PC-9 (cell line): ENCODE measurements at regions of chr6 and their contacts with region 1.

Region 1: DNA sequence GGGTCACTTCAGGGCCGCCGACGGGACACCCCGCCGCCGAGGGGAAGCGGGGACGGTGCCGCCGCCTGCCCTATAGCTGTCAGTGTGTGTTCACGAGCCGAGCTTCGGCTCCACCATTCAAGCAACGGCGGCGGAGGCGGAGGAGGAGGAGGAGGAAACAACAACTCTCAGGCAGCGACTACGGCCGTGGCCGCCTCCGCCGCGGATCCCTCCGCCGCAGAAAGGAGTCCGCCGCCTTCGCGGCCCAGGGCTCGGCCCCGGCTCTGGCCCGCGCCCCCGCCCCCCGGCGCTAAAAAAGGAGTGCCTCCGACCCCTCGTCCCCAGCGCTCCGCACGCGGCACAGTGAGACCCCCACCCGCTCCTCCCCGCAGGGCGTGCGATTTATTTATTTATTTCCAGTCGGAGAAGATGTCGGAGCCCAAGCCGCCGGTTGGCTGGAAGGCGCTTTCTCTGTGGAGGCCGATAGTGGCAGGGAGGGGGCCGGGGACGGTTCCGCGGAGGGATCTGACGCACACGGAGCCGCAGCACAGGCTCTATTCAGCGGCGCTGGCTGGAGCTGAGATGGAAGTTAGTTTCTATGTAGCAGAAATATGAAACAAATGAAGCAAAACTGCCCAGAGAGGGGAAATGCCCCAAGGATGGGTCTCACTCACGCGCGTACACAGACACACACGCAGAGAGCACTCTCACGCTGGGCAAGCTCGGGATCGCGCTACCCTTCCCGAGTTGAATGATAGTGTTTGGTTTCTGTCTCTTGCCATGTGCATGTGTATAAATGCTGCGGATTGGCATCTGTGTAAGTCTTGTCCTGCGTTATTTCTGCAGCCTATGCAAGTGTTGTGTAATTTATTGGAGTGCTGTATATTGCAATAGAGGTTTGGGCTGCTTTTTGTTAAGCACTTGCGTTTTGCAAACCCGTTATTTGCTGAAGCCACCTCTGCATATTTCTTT is at the start of gene PHIP:
- DNase-seq: peak; percentile 71 to 89
- H3K4me3 ChIP-seq: peak within 1 kb of the TSS; percentile 89
- H3K27ac ChIP-seq: peak within 1 kb of the TSS; percentile 69
- H3K4me1 ChIP-seq: peaks cover 22% of the 10 kb centered on the region; the same call in 1 of the 2 replicates
- H3K27me3 ChIP-seq: no peaks in the 10 kb centered on the region
- CTCF ChIP-seq: no peak
- total RNA-seq, gene PHIP: 20.6 and 29.0 TPM in 2 replicates

Region 2: GRCh38 chr6:79233611-79234149 is 155.3 kb after region 1 on chr6:
- CTCF ChIA-PET with region 1: no interaction called
- POLR2A ChIA-PET with region 1: no interaction called
- intact Hi-C with region 1: loop called (anchors 2 kb)
- DNase-seq: peak; percentile 66 to 80
- H3K4me3 ChIP-seq: peak overlapping the region; percentile 92
- H3K27ac ChIP-seq: peak overlapping the region; percentile 6; the same call in 1 of the 2 replicates
- H3K4me1 ChIP-seq: peaks cover 10% of the 10 kb centered on the region
- H3K27me3 ChIP-seq: no peaks in the 10 kb centered on the region
- CTCF ChIP-seq: 0 out of 2 replicates have a peak, but pooled peaks have one; percentile 25

Region 3: GRCh38 chr6:79431537-79431933 is 353.2 kb after region 1 on chr6:
- CTCF ChIA-PET with region 1: no interaction called
- POLR2A ChIA-PET with region 1: interaction called, 21 read pairs
- intact Hi-C with region 1: no loop called
- DNase-seq: no peak
- H3K4me3 ChIP-seq: no peak overlapping the region
- H3K27ac ChIP-seq: no peak overlapping the region
- H3K4me1 ChIP-seq: no peaks in the 10 kb centered on the region
- H3K27me3 ChIP-seq: no peaks in the 10 kb centered on the region
- CTCF ChIP-seq: no peak

Region 4: GRCh38 chr6:79466207-79466834 is 388.0 kb after region 1 on chr6:
- CTCF ChIA-PET with region 1: no interaction called
- POLR2A ChIA-PET with region 1: interaction called, 12 read pairs
- intact Hi-C with region 1: loop called (anchors 2 kb)
- DNase-seq: no peak
- H3K4me3 ChIP-seq: no peak overlapping the region
- H3K27ac ChIP-seq: no peak overlapping the region
- H3K4me1 ChIP-seq: peaks cover 18% of the 10 kb centered on the region
- H3K27me3 ChIP-seq: no peaks in the 10 kb centered on the region
- CTCF ChIP-seq: peak; percentile 71

Region 5: GRCh38 chr6:79672631-79673111 is 594.3 kb after region 1 on chr6:
- CTCF ChIA-PET with region 1: no interaction called
- POLR2A ChIA-PET with region 1: no interaction called
- intact Hi-C with region 1: loop called (anchors 5 kb)
- DNase-seq: peak; percentile 2 to 48
- H3K4me3 ChIP-seq: no peak overlapping the region
- H3K27ac ChIP-seq: peak overlapping the region; percentile 76
- H3K4me1 ChIP-seq: peaks cover 31% of the 10 kb centered on the region
- H3K27me3 ChIP-seq: no peaks in the 10 kb centered on the region
- CTCF ChIP-seq: peak; percentile 61; the same call in 1 of the 2 replicates

Region 6: DNA sequence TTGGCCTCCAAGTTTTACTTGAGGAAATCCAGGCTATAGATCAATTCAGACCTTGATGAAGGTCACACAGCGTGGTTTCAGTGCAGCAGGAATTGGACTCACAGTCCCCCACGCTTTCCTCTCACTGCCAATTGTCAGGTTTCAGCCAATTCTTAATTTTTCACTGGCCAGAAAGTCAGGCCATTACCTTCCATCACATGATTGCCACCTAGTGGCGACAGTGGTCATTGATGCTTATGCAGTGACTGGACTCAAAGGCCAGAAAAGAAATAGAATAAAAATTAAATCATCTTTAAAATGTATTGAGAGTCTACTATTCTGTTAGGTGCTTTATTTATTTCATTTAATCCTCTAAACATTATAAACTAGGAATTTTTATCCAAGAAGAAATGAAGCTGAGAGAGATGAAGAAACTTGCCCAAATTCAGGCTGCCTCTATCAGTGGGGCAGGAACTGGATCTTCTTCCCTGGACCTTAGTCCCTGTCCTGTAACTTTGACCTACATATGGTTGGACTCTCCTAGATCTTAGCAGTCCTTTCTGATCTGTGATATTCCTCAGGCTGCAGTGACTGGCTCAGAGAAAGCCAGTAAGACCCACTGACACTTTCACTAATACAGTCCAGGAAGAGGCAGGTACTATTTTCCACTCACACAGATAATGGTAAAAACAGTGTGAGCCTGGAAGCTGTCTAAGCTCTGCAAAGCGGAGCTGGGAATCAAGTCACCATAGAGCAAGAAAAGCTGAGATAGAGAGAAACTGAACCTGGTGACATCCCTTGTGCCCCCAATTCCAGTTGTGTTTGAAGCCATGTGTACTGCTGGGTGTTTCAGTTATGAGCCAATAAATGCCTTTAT is 735.7 kb after region 1 on chr6:
- CTCF ChIA-PET with region 1: no interaction called
- POLR2A ChIA-PET with region 1: no interaction called
- intact Hi-C with region 1: loop called (anchors 10 kb)
- DNase-seq: peak in 1 of 2 experiments; percentile 65
- H3K4me3 ChIP-seq: no peak overlapping the region
- H3K27ac ChIP-seq: no peak overlapping the region
- H3K4me1 ChIP-seq: no peaks in the 10 kb centered on the region
- H3K27me3 ChIP-seq: no peaks in the 10 kb centered on the region
- CTCF ChIP-seq: peak; percentile 85